ENCODE measurements at regions of chr10 and their contacts with region 1.

Region 1: GRCh38 chr10:59625721-59626522 is 83.7 kb downstream of the SLC16A9 start:
- DNase-seq: peak; percentile 77 to 86
- H3K4me3 ChIP-seq: no peak overlapping the region
- H3K4me3 Mint-ChIP-seq: no peak overlapping the region
- H3K27ac Mint-ChIP-seq: no peak overlapping the region
- H3K4me1 ChIP-seq: peaks cover 3% of the 10 kb centered on the region; the same call in 1 of the 2 replicates
- H3K4me1 Mint-ChIP-seq: peaks cover 6% of the 10 kb centered on the region
- H3K27me3 ChIP-seq: no peaks in the 10 kb centered on the region
- H3K27me3 Mint-ChIP-seq: peaks cover 3% of the 10 kb centered on the region
- CTCF ChIP-seq: peak; percentile 95 to 97

Region 2: DNA sequence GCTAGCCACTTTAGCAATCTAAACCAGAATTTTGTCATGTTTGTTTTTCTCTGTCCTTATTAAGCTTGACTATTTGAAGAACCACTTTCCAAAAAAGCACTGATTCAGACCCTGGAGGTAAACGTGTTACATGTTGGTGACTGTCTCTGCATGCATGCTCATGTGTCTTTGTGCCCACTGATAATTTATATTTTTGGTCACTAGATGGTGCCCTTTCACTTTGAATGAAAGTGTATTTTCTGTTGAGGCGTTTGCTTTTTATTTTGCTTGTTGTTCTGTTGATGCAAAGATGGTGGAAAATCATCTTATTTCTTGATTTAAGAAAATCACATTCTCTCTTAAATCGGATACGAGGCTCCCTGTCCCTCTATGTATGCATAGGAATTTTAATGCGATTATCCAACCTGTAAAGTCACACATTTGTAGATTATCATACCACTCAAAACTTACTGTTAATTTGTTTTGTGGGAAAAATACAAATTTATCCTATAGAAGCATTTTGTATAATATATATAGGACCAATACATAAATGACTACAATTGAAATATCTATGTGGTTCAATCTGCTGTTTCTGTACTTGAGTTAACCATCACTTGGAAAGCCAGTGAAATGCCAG is 843.9 kb before region 1 on chr10:
- CTCF ChIA-PET with region 1: no interaction called
- POLR2A ChIA-PET with region 1: no interaction called
- intact Hi-C with region 1: loop called (anchors 1 kb)
- DNase-seq: peak in 1 of 2 experiments; percentile 78
- H3K4me3 ChIP-seq: no peak overlapping the region
- H3K4me3 Mint-ChIP-seq: no peak overlapping the region
- H3K27ac Mint-ChIP-seq: peak overlapping the region; percentile 60
- H3K4me1 ChIP-seq: peaks cover 31% of the 10 kb centered on the region
- H3K4me1 Mint-ChIP-seq: peaks cover 38% of the 10 kb centered on the region
- H3K27me3 ChIP-seq: no peaks in the 10 kb centered on the region
- H3K27me3 Mint-ChIP-seq: no peaks in the 10 kb centered on the region
- CTCF ChIP-seq: peak; percentile 71 to 83

Region 3: GRCh38 chr10:59536167-59536930 is 89.6 kb before region 1 on chr10:
- CTCF ChIA-PET with region 1: no interaction called
- POLR2A ChIA-PET with region 1: no interaction called
- intact Hi-C with region 1: no loop called
- DNase-seq: no peak
- H3K4me3 ChIP-seq: no peak overlapping the region
- H3K4me3 Mint-ChIP-seq: no peak overlapping the region
- H3K27ac Mint-ChIP-seq: no peak overlapping the region
- H3K4me1 ChIP-seq: no peaks in the 10 kb centered on the region
- H3K4me1 Mint-ChIP-seq: no peaks in the 10 kb centered on the region
- H3K27me3 ChIP-seq: no peaks in the 10 kb centered on the region
- H3K27me3 Mint-ChIP-seq: peaks cover 4% of the 10 kb centered on the region
- CTCF ChIP-seq: no peak

Region 4: GRCh38 chr10:59674211-59674836 is 48.4 kb after region 1 on chr10:
- CTCF ChIA-PET with region 1: no interaction called
- POLR2A ChIA-PET with region 1: no interaction called
- intact Hi-C with region 1: loop called (anchors 1 kb)
- DNase-seq: peak; percentile 63 to 76
- H3K4me3 ChIP-seq: no peak overlapping the region
- H3K4me3 Mint-ChIP-seq: no peak overlapping the region
- H3K27ac Mint-ChIP-seq: peak overlapping the region; percentile 73
- H3K4me1 ChIP-seq: peaks cover 16% of the 10 kb centered on the region
- H3K4me1 Mint-ChIP-seq: peaks cover 12% of the 10 kb centered on the region
- H3K27me3 ChIP-seq: no peaks in the 10 kb centered on the region
- H3K27me3 Mint-ChIP-seq: no peaks in the 10 kb centered on the region
- CTCF ChIP-seq: no peak

Region 5: DNA sequence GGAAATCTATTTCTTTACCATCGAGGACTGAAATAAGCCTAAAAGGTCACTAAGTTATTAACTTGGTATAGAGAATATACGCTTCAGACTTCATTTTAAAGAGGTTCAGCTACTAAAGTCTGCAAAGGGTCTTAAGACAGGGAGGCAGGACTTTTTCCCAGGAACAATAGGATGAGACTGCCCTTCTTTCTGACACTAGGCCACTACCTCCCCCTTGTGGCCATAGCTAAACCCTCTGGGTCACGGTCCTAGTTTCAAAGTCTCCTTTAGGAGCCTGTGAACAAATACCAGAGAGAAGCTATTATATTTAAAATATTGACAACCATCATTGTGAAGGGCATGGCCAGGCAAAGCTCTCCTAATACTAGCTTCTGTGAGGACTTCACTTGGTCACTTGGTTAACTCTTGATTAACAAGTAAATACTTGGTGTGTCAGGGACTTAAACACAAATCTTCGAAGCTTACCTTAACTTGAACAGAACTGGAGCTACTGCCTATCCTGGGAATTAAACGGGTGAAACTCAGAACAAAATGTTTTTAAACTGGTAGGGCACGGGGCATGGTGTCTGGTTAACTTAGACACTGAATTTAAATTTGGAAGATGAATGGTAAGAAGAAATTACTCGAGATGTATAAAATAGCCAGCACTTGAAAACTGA is 204.8 kb after region 1 on chr10:
- CTCF ChIA-PET with region 1: interaction called, 10 read pairs
- POLR2A ChIA-PET with region 1: no interaction called
- intact Hi-C with region 1: loop called (anchors 1 kb)
- DNase-seq: peak; percentile 68 to 79
- H3K4me3 ChIP-seq: no peak overlapping the region
- H3K4me3 Mint-ChIP-seq: no peak overlapping the region
- H3K27ac Mint-ChIP-seq: no peak overlapping the region
- H3K4me1 ChIP-seq: no peaks in the 10 kb centered on the region; the same call in 1 of the 2 replicates
- H3K4me1 Mint-ChIP-seq: peaks cover 7% of the 10 kb centered on the region
- H3K27me3 ChIP-seq: no peaks in the 10 kb centered on the region
- H3K27me3 Mint-ChIP-seq: no peaks in the 10 kb centered on the region
- CTCF ChIP-seq: peak; percentile 91 to 98

Region 6: GRCh38 chr10:60048091-60048501 is 422.2 kb after region 1 on chr10:
- CTCF ChIA-PET with region 1: interaction called, 5 read pairs
- POLR2A ChIA-PET with region 1: no interaction called
- intact Hi-C with region 1: loop called (anchors 1 kb)
- DNase-seq: peak; percentile 81 to 83
- H3K4me3 ChIP-seq: no peak overlapping the region
- H3K4me3 Mint-ChIP-seq: no peak overlapping the region
- H3K27ac Mint-ChIP-seq: no peak overlapping the region
- H3K4me1 ChIP-seq: peaks cover 5% of the 10 kb centered on the region
- H3K4me1 Mint-ChIP-seq: no peaks in the 10 kb centered on the region
- H3K27me3 ChIP-seq: no peaks in the 10 kb centered on the region
- H3K27me3 Mint-ChIP-seq: no peaks in the 10 kb centered on the region
- CTCF ChIP-seq: peak; percentile 84 to 86

Region 7: GRCh38 chr10:60434418-60435046 is 808.6 kb after region 1 on chr10:
- CTCF ChIA-PET with region 1: no interaction called
- POLR2A ChIA-PET with region 1: no interaction called
- intact Hi-C with region 1: loop called (anchors 10 kb)
- DNase-seq: peak; percentile 55 to 76
- H3K4me3 ChIP-seq: no peak overlapping the region
- H3K4me3 Mint-ChIP-seq: no peak overlapping the region
- H3K27ac Mint-ChIP-seq: no peak overlapping the region
- H3K4me1 ChIP-seq: no peaks in the 10 kb centered on the region
- H3K4me1 Mint-ChIP-seq: no peaks in the 10 kb centered on the region
- H3K27me3 ChIP-seq: no peaks in the 10 kb centered on the region
- H3K27me3 Mint-ChIP-seq: no peaks in the 10 kb centered on the region
- CTCF ChIP-seq: peak; percentile 84 to 90